ENCODE measurements at regions of chr5 and their contacts with region 1.

Region 1: GRCh38 chr5:157607371-157608161 is 32.0 kb upstream of the ADAM19 start:
- DNase-seq: peak; percentile 44
- H3K4me3 ChIP-seq: no peak overlapping the region
- CTCF ChIP-seq: no peak

Region 2: GRCh38 chr5:157618191-157618772 is 10.7 kb after region 1 on chr5:
- CTCF ChIA-PET with region 1: interaction called, 12 read pairs
- POLR2A ChIA-PET with region 1: no interaction called
- DNase-seq: no peak
- H3K4me3 ChIP-seq: no peak overlapping the region
- CTCF ChIP-seq: no peak

Region 3: GRCh38 chr5:157731272-157732129 is 123.9 kb after region 1 on chr5 and contains the start of gene THG1L:
- CTCF ChIA-PET with region 1: no interaction called
- POLR2A ChIA-PET with region 1: no interaction called
- DNase-seq: peak; percentile 81
- H3K4me3 ChIP-seq: peak within 1 kb of the TSS; percentile 94
- CTCF ChIP-seq: no peak